ENCODE measurements at regions of chr6 and their contacts with region 1.

Region 1: GRCh38 chr6:35601331-35602132 is 87.2 kb downstream of the FKBP5 start:
- DNase-seq: peak; percentile 16
- H3K4me3 Mint-ChIP-seq: peak overlapping the region; percentile 10
- H3K27ac Mint-ChIP-seq: no peak overlapping the region
- H3K4me1 Mint-ChIP-seq: peaks cover 39% of the 10 kb centered on the region
- H3K27me3 Mint-ChIP-seq: no peaks in the 10 kb centered on the region
- CTCF ChIP-seq: no peak

Region 2: GRCh38 chr6:35688581-35689322 is 87.2 kb after region 1 on chr6 and contains the start of gene FKBP5:
- CTCF ChIA-PET with region 1: no interaction called
- intact Hi-C with region 1: loop called (anchors 10 kb)
- DNase-seq: peak; percentile 97
- H3K4me3 Mint-ChIP-seq: peak within 1 kb of the TSS; percentile 98
- H3K27ac Mint-ChIP-seq: peak within 1 kb of the TSS; percentile 77
- H3K4me1 Mint-ChIP-seq: peaks cover 7% of the 10 kb centered on the region
- H3K27me3 Mint-ChIP-seq: no peaks in the 10 kb centered on the region
- CTCF ChIP-seq: no peak
- total RNA-seq, gene FKBP5: 14.3 and 15.1 TPM in 2 replicates